Mammary epithelial cell (primary cell): ENCODE measurements at regions of chr6 and their contacts with region 1.

Region 1: GRCh38 chr6:13328076-13328874 is at the start of gene TBC1D7:
- DNase-seq: peak; percentile 89
- H3K4me3 ChIP-seq: peak within 1 kb of the TSS; percentile 80 to 99 (median 90)
- H3K27ac ChIP-seq: peak within 1 kb of the TSS; percentile 76
- H3K4me1 ChIP-seq: peaks cover 10% of the 10 kb centered on the region
- H3K27me3 ChIP-seq: no peaks in the 10 kb centered on the region
- CTCF ChIP-seq: peak; percentile 12 to 23
- total RNA-seq, gene TBC1D7: 21.0 to 22.1 TPM

Region 2: GRCh38 chr6:12911387-12911960 is 416.8 kb before region 1 on chr6:
- CTCF ChIA-PET with region 1: no interaction called
- dilution Hi-C with region 1: no loop called
- in situ Hi-C with region 1: loop called (anchors 25 kb)
- intact Hi-C with region 1: loop called (anchors 1 kb)
- DNase-seq: peak; percentile 3
- H3K4me3 ChIP-seq: no peak overlapping the region
- H3K27ac ChIP-seq: no peak overlapping the region
- H3K4me1 ChIP-seq: no peaks in the 10 kb centered on the region
- H3K27me3 ChIP-seq: peaks cover 2% of the 10 kb centered on the region
- CTCF ChIP-seq: peak; percentile 30 to 46

Region 3: GRCh38 chr6:12957321-12958051 is 370.8 kb before region 1 on chr6:
- CTCF ChIA-PET with region 1: no interaction called
- dilution Hi-C with region 1: no loop called
- in situ Hi-C with region 1: no loop called
- intact Hi-C with region 1: loop called (anchors 5 kb)
- DNase-seq: peak; percentile 35
- H3K4me3 ChIP-seq: peak overlapping the region; percentile 39 to 51 (median 48)
- H3K27ac ChIP-seq: no peak overlapping the region
- H3K4me1 ChIP-seq: peaks cover 5% of the 10 kb centered on the region
- H3K27me3 ChIP-seq: no peaks in the 10 kb centered on the region
- CTCF ChIP-seq: no peak

Region 4: GRCh38 chr6:13194852-13195251 is 133.4 kb before region 1 on chr6:
- CTCF ChIA-PET with region 1: no interaction called
- dilution Hi-C with region 1: no loop called
- in situ Hi-C with region 1: loop called in 1 of 2 experiments (anchors 10 kb)
- intact Hi-C with region 1: loop called (anchors 1 kb)
- DNase-seq: peak; percentile 14
- H3K4me3 ChIP-seq: no peak overlapping the region
- H3K27ac ChIP-seq: no peak overlapping the region
- H3K4me1 ChIP-seq: no peaks in the 10 kb centered on the region
- H3K27me3 ChIP-seq: no peaks in the 10 kb centered on the region
- CTCF ChIP-seq: peak; percentile 39 to 67

Region 5: DNA sequence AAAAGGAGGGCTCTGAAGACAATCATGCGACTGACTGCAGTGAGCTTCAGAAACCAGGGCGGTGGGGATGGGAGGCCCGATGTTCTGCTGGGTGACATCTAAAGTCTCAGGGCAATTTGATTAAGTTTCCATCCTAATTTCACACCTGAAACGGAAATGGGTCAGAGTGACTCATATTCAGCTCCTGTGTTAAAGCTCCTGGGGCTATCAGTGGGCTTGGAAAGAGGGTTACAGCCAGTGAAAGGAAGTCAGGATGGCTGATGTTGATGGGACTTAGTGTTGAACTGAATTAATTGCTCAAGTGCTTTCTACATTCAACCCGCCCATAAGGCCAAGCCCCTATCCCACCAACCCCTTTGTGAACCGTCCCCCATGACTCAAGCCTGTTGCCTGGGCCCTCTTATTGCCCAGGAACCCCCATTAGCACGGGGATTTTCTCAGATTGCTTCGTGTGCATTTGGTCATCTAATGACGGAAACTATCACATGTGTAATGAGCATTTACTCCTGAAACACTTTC is 47.1 kb after region 1 on chr6:
- CTCF ChIA-PET with region 1: no interaction called
- dilution Hi-C with region 1: no loop called
- in situ Hi-C with region 1: no loop called
- intact Hi-C with region 1: no loop called
- DNase-seq: peak; percentile 15
- H3K4me3 ChIP-seq: no peak overlapping the region
- H3K27ac ChIP-seq: no peak overlapping the region
- H3K4me1 ChIP-seq: peaks cover 19% of the 10 kb centered on the region
- H3K27me3 ChIP-seq: no peaks in the 10 kb centered on the region
- CTCF ChIP-seq: no peak

Region 6: GRCh38 chr6:13614926-13615798 is 286.9 kb after region 1 on chr6 and contains the start of gene NOL7:
- CTCF ChIA-PET with region 1: no interaction called
- dilution Hi-C with region 1: no loop called
- in situ Hi-C with region 1: loop called in 1 of 2 experiments (anchors 25 kb)
- intact Hi-C with region 1: no loop called
- DNase-seq: peak; percentile 95
- H3K4me3 ChIP-seq: peak within 1 kb of the TSS; percentile 66 to 85 (median 81)
- H3K27ac ChIP-seq: peak within 1 kb of the TSS; percentile 77
- H3K4me1 ChIP-seq: peaks cover 10% of the 10 kb centered on the region
- H3K27me3 ChIP-seq: no peaks in the 10 kb centered on the region
- CTCF ChIP-seq: peak; percentile 95
- total RNA-seq, gene NOL7: 20.3 to 70.0 TPM

Region 7: GRCh38 chr6:14265049-14266021 is 937.1 kb after region 1 on chr6:
- CTCF ChIA-PET with region 1: no interaction called
- dilution Hi-C with region 1: no loop called
- in situ Hi-C with region 1: no loop called
- intact Hi-C with region 1: no loop called
- DNase-seq: no peak
- H3K4me3 ChIP-seq: no peak overlapping the region
- H3K27ac ChIP-seq: no peak overlapping the region
- H3K4me1 ChIP-seq: peaks cover 4% of the 10 kb centered on the region
- H3K27me3 ChIP-seq: no peaks in the 10 kb centered on the region
- CTCF ChIP-seq: no peak